ENCODE measurements at regions of chr16 and their contacts with region 1.

Region 1: DNA sequence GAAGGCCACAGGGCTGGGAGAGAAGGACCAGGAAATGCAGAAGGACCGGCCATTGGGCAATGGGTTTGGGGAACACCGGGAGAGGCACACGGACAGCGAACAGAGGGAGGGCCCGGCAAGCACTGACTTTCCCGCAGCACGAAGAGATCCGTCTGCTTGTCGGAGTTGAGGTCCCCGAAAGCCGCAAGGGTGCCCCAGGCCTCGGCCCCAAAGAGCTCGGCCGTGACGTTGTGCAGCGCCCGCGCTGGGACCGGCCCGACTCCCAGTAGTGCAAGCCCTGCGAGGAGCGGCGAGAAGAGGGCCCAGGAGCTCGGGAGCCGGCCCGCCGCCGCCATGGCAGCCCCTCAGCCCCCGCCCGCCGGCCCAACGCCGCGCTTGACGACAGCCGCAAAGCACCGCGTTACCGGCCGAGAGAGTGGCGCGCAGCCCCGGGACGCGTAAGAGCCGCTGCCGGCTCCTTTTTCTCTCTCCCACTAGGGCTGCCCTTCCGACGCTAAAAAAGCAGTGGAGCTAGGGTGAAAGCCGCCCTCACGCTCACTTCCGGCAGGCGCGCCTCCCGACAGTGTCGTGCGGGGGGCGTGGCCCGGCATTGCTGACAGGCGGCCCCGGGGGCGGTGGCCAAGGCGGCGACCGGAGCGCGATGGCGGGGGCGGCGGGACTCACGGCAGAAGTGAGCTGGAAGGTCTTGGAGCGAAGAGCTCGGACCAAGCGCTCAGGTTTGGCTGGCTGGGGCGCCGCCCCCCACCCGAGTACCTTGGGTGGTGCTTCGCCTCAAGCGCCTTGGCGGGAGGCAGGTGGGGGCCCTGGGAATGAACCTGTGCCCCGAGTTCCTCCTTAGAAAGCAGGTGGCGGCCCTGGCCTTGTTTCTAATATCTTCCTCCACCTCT is at the starts of genes ITFG1 and PHKB:
- DNase-seq: peak; percentile 90
- H3K4me3 Mint-ChIP-seq: peak within 1 kb of the TSS; percentile 94
- H3K27ac Mint-ChIP-seq: peak within 1 kb of the TSS; percentile 99
- H3K4me1 Mint-ChIP-seq: peaks cover 35% of the 10 kb centered on the region
- H3K27me3 Mint-ChIP-seq: no peaks in the 10 kb centered on the region
- CTCF ChIP-seq: no peak
- total RNA-seq, gene ITFG1: 35.4 and 44.0 TPM in 2 replicates
- total RNA-seq, gene PHKB: 62.2 and 67.3 TPM in 2 replicates

Region 2: GRCh38 chr16:47363761-47364160 is 97.2 kb before region 1 on chr16:
- CTCF ChIA-PET with region 1: no interaction called
- POLR2A ChIA-PET with region 1: no interaction called
- intact Hi-C with region 1: no loop called
- DNase-seq: no peak
- H3K4me3 Mint-ChIP-seq: no peak overlapping the region
- H3K27ac Mint-ChIP-seq: no peak overlapping the region
- H3K4me1 Mint-ChIP-seq: peaks cover 8% of the 10 kb centered on the region
- H3K27me3 Mint-ChIP-seq: no peaks in the 10 kb centered on the region
- CTCF ChIP-seq: no peak

Region 3: GRCh38 chr16:47448830-47449575 is 12.0 kb before region 1 on chr16:
- CTCF ChIA-PET with region 1: interaction called, 5 read pairs
- POLR2A ChIA-PET with region 1: interaction called, 11 read pairs
- intact Hi-C with region 1: no loop called
- DNase-seq: no peak
- H3K4me3 Mint-ChIP-seq: no peak overlapping the region
- H3K27ac Mint-ChIP-seq: no peak overlapping the region
- H3K4me1 Mint-ChIP-seq: peaks cover 5% of the 10 kb centered on the region
- H3K27me3 Mint-ChIP-seq: no peaks in the 10 kb centered on the region
- CTCF ChIP-seq: no peak

Region 4: DNA sequence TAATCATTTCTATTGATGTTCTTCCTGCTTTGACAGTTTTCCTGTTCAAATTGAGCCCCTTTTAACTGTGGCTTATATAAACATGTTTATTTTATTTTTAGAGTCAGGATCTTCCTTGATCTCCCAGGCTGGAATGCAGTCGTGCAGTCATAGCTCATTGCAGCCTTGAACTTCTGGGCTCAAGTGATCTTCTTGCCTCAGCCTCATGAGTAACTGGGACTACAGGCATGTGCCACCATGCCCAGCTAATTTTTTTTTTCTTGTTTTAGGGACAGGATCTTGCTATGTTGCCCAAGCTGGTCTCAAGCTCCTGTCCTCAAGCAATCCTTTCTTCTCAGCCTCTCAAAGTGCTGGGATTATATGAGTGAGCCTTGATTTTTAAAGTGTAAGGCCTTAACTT is 14.8 kb after region 1 on chr16:
- CTCF ChIA-PET with region 1: interaction called, 6 read pairs
- POLR2A ChIA-PET with region 1: interaction called, 90 read pairs
- intact Hi-C with region 1: no loop called
- DNase-seq: no peak
- H3K4me3 Mint-ChIP-seq: no peak overlapping the region
- H3K27ac Mint-ChIP-seq: no peak overlapping the region
- H3K4me1 Mint-ChIP-seq: peaks cover 20% of the 10 kb centered on the region
- H3K27me3 Mint-ChIP-seq: no peaks in the 10 kb centered on the region
- CTCF ChIP-seq: no peak

Region 5: DNA sequence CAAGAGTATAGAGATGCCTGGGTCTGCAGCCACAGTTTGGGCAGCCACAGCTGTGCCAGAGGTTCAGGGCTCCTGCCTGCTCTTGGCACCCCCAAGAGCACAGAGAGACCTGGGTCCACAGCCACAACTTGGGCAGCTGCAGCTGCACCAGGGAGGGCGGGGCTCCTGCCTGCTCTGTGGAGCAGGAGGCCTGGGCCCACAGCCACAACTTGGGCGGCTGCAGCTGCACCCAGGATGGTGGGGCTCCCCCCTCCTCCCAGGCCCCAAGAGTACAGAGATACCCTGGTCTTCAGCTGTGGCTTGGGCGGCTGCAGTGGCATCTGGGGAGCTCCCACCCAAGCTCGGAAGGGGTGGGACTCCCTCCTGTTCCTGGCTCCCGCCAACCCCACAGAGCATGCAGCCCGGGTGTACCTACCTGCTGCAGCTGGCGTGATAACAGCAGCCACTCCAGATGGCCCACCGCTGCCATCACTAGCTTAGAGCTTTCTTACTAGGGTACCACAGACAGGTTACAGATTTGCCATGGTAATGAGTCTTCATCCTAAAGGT is 72.9 kb after region 1 on chr16:
- CTCF ChIA-PET with region 1: no interaction called
- POLR2A ChIA-PET with region 1: no interaction called
- intact Hi-C with region 1: no loop called
- DNase-seq: no peak
- H3K4me3 Mint-ChIP-seq: no peak overlapping the region
- H3K27ac Mint-ChIP-seq: no peak overlapping the region
- H3K4me1 Mint-ChIP-seq: no peaks in the 10 kb centered on the region
- H3K27me3 Mint-ChIP-seq: no peaks in the 10 kb centered on the region
- CTCF ChIP-seq: no peak

Region 6: GRCh38 chr16:48156790-48157209 is 695.8 kb after region 1 on chr16:
- CTCF ChIA-PET with region 1: interaction called, 3 read pairs
- POLR2A ChIA-PET with region 1: no interaction called
- intact Hi-C with region 1: loop called (anchors 5 kb)
- DNase-seq: peak; percentile 78
- H3K4me3 Mint-ChIP-seq: no peak overlapping the region
- H3K27ac Mint-ChIP-seq: no peak overlapping the region
- H3K4me1 Mint-ChIP-seq: peaks cover 10% of the 10 kb centered on the region
- H3K27me3 Mint-ChIP-seq: no peaks in the 10 kb centered on the region
- CTCF ChIP-seq: peak; percentile 96